Right cardiac atrium (tissue), 5 donors: ENCODE measurements at regions of chr12 and their contacts with region 1.

Region 1: DNA sequence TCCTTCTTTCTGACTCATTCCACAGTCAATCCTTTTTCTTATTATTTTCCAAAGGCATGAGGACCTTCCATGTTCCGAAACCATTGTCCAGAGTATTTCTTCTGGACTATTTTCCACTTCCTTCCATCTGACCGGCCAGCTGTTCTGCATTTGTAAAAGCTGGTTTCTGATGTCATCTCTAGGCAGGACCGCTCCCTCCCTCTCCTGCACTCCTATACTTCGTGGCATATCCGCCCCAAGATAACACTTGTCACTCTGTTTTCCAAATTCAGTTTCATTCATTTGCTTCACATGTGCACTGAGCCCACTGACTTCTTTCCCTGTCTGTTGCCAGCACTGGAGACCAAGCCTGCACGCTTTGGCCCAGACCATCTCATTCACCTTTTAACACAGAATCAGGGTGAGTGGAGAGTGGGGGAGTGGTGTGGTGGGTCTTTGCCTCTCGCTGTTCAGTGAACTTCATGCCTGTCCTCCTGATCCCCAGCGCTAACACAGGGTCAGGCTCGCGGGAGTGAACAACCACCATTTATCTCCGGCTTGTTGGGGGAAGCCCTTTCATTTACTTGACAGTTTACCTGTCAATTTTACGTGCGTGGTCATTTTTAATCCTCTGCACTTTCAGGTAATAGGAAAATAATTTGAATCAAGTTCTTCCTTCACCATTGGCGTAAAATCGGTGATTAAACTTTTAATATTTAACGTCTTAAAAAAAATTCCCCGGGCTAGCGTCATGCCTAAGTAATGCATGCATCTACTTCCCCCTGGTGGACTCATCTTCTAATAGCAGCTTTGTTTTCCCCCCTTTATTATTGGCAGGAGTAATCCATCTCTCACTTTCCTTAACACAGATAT is 52.5 kb downstream of the C12orf75 start:
- DNase-seq: no peak
- ATAC-seq: peak; percentile 78 to 81
- H3K4me3 ChIP-seq: peak overlapping the region; percentile 14
- H3K27ac ChIP-seq: no peak overlapping the region
- H3K4me1 ChIP-seq: peaks cover 2% of the 10 kb centered on the region
- H3K27me3 ChIP-seq: no peaks in the 10 kb centered on the region

Region 2: DNA sequence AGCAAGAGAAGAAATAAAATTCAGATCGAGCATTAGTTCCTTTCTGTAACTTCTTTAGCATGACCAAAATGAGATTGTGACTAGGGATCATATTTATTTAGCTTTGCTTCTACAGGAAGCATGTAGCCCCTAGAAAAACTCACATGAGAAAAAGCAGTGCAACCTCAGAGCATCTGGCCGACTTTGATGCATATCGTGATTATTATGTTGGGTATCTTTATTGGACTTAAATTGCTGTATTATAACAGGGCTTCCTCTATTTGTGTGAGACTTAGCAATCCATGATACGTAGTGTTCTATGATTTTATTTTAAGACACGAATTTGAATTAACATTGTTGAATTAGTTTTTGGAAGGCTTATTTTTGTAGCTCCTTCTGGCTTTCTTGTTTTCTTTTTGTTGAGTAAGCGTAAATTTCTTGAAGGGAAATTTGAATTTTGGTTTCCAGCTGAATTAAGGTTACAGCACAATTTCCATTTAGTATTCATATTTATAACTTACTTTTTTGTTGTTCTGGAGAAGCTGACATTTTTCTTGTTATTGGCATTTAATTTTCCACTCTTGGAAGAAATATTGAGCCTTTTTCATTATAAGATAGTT is 241.6 kb before region 1 on chr12:
- intact Hi-C with region 1: loop called in 1 of 4 experiments (anchors 10 kb)
- DNase-seq: no peak
- ATAC-seq: no peak
- H3K4me3 ChIP-seq: no peak overlapping the region
- H3K27ac ChIP-seq: no peak overlapping the region
- H3K4me1 ChIP-seq: no peaks in the 10 kb centered on the region
- H3K27me3 ChIP-seq: no peaks in the 10 kb centered on the region

Region 3: DNA sequence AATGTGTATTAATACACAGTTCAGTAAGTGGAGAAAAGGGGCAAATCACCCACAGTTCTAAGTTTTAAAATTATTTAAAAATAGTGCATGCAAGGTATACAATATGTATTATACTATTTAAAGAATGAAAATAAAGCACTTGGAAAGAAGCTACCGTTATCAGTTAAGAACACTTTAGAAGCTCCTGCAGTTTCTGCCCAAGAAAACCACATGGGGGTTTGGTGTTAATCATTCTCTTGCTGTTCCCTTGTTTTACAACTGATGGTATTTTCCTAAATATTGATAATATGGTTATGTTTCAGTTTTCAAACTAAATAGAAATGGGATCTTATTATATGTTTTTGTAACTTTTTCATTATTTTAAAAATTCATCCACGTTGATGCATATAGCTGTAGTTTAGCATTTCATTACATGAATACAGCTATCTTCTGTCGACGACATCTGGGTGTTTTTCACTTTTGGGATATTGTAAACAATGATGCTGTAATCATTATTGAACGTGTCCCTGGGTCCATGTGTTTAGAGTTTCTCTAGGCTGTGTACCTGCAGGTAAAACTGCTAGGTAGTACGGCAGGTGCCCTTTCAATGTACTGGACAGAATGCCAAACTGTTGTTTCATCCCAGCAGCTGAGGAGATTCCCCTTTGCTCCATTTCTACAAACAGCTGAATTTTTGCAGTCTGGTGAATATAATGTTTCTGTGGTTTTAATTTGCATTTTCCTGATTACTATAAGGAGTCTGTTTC is 211.1 kb before region 1 on chr12:
- intact Hi-C with region 1: loop called in 1 of 4 experiments (anchors 10 kb)
- DNase-seq: no peak
- ATAC-seq: no peak
- H3K4me3 ChIP-seq: no peak overlapping the region
- H3K27ac ChIP-seq: no peak overlapping the region
- H3K4me1 ChIP-seq: no peaks in the 10 kb centered on the region
- H3K27me3 ChIP-seq: no peaks in the 10 kb centered on the region

Region 4: GRCh38 chr12:105279460-105280056 is 103.4 kb before region 1 on chr12:
- intact Hi-C with region 1: loop called in 2 of 4 experiments (anchors 5 to 10 kb)
- DNase-seq: peak in 1 of 3 donors; percentile 15
- ATAC-seq: peak; percentile 63 to 64
- H3K4me3 ChIP-seq: no peak overlapping the region
- H3K27ac ChIP-seq: no peak overlapping the region
- H3K4me1 ChIP-seq: no peaks in the 10 kb centered on the region
- H3K27me3 ChIP-seq: no peaks in the 10 kb centered on the region